ENCODE measurements at regions of chr2 and their contacts with region 1.

Region 1: DNA sequence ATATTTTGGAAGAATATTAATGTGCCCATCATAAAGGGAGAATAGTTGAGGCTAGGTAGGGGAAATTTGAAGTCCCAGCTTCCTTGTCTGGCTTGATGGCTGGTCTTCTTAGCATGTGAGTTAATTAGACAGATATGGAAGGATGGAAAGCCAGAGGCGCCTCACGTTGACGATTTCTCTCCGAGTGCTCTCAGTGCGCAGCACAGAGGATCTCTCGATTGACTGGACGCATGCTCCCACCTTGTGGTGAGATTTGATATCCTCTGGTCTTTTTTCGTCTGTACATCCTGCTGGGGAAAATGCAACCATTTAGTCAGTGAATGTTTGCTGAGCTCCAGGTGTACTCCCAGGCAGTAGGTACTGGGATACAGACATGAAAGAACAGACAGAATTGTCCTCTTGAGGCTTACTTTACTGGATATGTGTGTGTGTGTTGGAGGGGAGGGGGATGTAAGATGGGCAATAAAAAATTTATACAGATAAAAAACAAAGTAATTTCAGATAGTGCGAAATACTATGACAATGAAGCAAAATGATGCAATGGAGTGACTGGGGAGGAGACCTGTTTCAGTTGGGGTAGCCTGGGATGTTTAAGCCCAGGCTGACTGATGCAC is 66.9 kb upstream of the ZNG1B start:
- DNase-seq: peak; percentile 40 to 95 (median 66)

Region 2: DNA sequence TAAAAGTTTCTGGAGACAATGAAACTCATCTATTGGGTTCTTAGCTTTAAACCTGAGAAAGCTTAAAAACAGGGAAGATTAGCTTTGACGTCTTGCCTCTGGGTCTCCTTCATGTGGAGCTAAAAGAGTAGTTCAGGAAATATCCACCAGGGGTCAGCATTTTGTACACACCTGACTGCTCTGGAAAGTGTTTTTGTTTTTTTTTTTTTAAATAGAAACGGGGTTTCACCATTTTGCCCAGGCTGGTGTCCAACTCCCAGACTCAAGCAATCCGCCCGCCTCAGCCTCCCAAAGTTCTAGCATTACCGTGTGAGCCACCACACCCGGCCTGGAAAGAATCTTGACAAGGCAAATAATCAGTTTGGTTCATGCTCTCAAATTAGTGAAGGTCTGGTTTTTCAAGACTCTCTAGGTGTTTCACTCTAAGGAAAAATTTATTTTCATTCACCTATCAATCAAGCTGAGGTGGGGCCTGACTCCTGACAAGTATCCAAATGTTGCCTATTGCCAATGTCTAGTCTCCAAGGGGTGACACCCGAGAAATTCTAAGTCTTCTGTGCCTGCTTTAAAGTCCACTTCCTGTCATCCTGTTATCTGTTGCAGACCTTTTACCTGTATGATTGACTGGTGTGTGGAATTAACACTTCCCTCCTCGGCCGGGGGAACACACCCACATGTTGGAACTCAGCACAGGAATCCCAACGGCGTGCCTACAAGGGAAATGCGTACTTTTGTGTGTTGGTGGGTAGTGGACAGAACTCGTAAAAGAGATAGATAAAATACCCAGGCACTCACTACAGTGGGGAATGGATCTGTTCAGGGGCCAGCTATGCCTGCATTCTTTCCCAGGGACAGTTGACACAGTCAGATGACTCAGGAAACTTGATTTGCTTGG is 231.9 kb before region 1 on chr2:
- intact Hi-C with region 1: loop called (anchors 1 kb)
- DNase-seq: no peak

Region 3: DNA sequence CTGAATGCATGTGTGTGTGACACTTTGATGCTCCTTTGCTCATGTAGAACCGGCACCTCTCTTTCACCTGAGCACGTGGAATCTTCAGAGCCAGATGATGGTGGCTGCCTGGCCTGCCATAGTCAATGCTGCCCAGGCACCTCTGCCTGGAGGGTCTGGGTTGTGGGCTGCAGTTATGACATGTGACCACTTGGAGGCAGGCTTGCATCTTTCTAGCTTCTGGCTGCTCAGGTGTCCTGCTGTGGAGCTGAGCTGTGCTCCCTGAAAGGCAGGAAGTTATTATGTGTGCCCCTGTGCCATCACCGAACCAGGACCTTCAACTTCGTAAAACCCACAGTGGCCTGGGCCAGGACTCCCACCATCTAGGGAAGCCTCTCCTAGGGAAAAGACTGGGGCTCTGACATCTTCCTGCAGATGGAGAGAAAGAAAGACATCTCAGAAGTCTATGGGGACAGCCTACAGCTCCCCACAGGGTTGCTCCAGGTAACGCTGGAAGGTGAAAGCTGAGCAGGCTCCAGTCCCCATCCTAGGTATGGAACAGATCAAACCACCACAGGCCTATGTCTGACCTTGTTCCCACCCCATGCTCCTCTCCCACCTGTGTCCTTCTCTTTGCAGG is 166.6 kb before region 1 on chr2:
- intact Hi-C with region 1: loop called (anchors 2 kb)
- DNase-seq: peak; percentile 50 to 96 (median 74)

Region 4: GRCh38 chr2:113248997-113249770 is 121.4 kb before region 1 on chr2:
- intact Hi-C with region 1: loop called (anchors 2 kb)
- DNase-seq: peak in 9 of 10 donors; percentile 58 to 96 (median 75)

Region 5: DNA sequence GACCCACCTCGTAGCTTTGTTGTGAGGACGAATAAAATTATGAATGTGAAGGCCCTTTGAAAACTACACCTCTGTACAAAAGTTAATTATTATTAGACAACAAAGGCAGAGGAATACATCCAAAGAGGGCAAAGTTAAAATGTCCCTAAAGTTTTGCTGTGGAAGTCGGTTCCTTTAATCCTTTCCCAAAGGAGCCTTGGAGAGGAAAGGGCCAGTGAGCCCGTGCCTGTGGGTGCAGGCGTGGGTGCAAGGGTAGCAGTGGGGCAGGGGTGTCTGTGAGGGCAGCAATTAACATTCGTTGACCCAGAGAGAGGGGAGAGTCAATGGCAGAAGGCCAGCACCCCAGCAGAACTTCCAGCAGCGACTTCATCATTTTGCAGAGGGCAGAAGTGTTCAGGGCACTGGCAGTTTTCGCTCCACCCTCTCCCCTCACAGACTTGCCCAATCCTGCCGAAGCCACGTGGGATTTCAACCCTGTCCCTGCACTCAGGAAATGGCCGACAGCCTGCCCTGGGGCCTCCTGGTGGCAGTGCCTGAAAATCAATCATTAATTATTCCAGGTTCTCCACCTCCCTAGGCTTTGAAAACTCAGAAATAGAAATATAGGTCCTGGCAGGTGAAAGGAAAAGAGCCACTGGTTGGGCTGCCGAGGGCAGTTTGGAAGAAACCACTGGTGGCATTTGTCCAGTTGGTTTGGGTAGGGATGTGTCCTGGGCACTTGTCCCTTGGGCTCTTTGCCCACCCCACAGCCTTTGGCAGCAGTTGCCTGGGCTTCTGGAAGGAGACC is 87.6 kb before region 1 on chr2:
- intact Hi-C with region 1: no loop called
- DNase-seq: peak in 8 of 10 donors; percentile 20 to 91 (median 40)

Measured in posterior cingulate gyrus (tissue), 11 donors.